Sigmoid colon (tissue), 7 donors: ENCODE measurements at regions of chr5 and their contacts with region 1.

Region 1: GRCh38 chr5:128498844-128499455 is 39.1 kb downstream of the FBN2 start:
- DNase-seq: no peak
- H3K4me3 ChIP-seq: no peak overlapping the region
- H3K27ac ChIP-seq: no peak overlapping the region
- H3K4me1 ChIP-seq: peaks cover 0 to 5% (median 0%) of the 10 kb centered on the region in 4 donors
- H3K27me3 ChIP-seq: no peaks in the 10 kb centered on the region
- CTCF ChIP-seq: peak in 2 of 4 experiments; percentile 24 to 29
- EP300 ChIP-seq: no peak
- POLR2A ChIP-seq: no peak

Region 2: DNA sequence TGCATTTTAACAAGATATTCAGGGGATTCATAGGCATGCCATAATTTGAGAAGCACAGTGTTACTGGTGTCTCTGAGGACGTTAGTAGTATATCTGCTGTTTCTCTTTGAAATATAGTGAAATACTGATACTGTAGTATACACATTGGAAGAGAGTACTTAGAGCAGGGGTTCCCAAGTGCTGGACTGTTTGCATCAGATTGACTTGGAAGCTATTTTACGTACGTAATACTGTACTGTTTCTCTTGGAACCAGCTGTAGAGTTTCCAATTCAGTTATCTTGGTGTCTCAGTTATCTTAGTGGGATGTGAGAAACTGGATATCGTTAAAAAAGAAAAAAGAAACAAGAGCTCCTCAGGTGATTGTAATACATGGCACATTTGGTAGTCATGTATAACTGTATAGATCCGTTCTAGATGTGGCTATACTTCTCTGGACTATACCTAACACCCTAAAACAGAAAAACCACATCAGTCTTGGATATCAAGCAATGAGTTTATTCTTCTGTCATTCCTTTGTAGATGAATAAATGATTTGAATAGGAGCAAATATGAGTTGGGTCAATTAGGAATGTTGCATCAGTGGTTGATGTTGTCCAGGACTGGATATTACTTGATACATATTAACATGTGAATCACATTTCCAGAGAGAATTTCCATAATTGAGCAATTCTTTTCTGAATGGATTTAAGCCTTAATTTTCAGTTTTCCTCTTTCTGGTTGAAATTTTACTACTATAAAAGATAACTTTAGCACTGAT is 948.1 kb before region 1 on chr5:
- intact Hi-C with region 1: loop called (anchors 10 kb)
- DNase-seq: no peak
- H3K4me3 ChIP-seq: no peak overlapping the region
- H3K27ac ChIP-seq: no peak overlapping the region
- H3K4me1 ChIP-seq: peaks cover 0 to 21% (median 2%) of the 10 kb centered on the region in 4 donors
- H3K27me3 ChIP-seq: no peaks in the 10 kb centered on the region
- CTCF ChIP-seq: no peak
- EP300 ChIP-seq: no peak
- POLR2A ChIP-seq: no peak

Region 3: GRCh38 chr5:127666043-127666716 is 832.8 kb before region 1 on chr5:
- intact Hi-C with region 1: no loop called
- DNase-seq: no peak
- H3K4me3 ChIP-seq: no peak overlapping the region
- H3K27ac ChIP-seq: peak overlapping the region; percentile 45 to 72 (median 56)
- H3K4me1 ChIP-seq: peaks cover 0 to 30% (median 25%) of the 10 kb centered on the region in 4 donors
- H3K27me3 ChIP-seq: no peaks in the 10 kb centered on the region
- CTCF ChIP-seq: no peak
- EP300 ChIP-seq: no peak
- POLR2A ChIP-seq: no peak

Region 4: GRCh38 chr5:128328446-128328845 is 170.5 kb before region 1 on chr5:
- intact Hi-C with region 1: no loop called
- DNase-seq: no peak
- H3K4me3 ChIP-seq: no peak overlapping the region
- H3K27ac ChIP-seq: no peak overlapping the region
- H3K4me1 ChIP-seq: peaks cover 0 to 8% (median 3%) of the 10 kb centered on the region in 4 donors
- H3K27me3 ChIP-seq: no peaks in the 10 kb centered on the region
- CTCF ChIP-seq: no peak
- EP300 ChIP-seq: no peak
- POLR2A ChIP-seq: no peak

Region 5: DNA sequence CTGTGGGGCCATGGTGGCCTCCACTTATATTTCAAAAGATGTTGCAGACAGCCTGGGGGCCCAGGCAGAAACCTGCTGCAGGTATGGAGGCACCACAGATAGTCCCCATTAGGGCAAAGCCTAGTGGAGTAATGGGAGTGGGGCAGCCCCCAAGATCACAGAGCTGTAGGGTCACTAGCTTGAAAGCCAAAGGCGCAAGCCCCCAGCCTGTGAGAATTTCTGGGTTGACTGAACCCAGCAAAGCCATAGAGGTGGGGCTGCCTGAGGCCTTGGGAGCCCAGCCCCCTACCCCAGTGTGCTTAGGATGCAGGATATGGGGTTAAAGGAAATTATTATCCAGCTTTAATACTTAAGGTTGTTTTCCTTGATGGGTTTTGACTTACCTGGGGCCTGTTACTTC is 204.4 kb after region 1 on chr5:
- intact Hi-C with region 1: no loop called
- DNase-seq: no peak
- H3K4me3 ChIP-seq: no peak overlapping the region
- H3K27ac ChIP-seq: no peak overlapping the region
- H3K4me1 ChIP-seq: no peaks in the 10 kb centered on the region
- H3K27me3 ChIP-seq: no peaks in the 10 kb centered on the region
- CTCF ChIP-seq: no peak
- EP300 ChIP-seq: no peak
- POLR2A ChIP-seq: no peak